Activated B cell treated with CpG ODN at 0.5 μM for 24 hours (primary cell): ENCODE measurements at regions of chr6 and their contacts with region 1.

Region 1: GRCh38 chr6:107459283-107460082 is at the start of gene PDSS2:
- DNase-seq: peak; percentile 95
- ATAC-seq: peak; percentile 96
- H3K4me3 Mint-ChIP-seq: peak within 1 kb of the TSS; percentile 95
- H3K27ac Mint-ChIP-seq: peak within 1 kb of the TSS; percentile 90
- H3K4me1 Mint-ChIP-seq: peaks cover 16% of the 10 kb centered on the region
- H3K27me3 Mint-ChIP-seq: no peaks in the 10 kb centered on the region
- CTCF ChIP-seq: no peak
- total RNA-seq, gene PDSS2: 14.6 and 19.3 TPM in 2 replicates

Region 2: GRCh38 chr6:107033126-107033525 is 426.4 kb before region 1 on chr6:
- CTCF ChIA-PET with region 1: no interaction called
- POLR2A ChIA-PET with region 1: no interaction called
- intact Hi-C with region 1: loop called (anchors 2 kb)
- DNase-seq: no peak
- ATAC-seq: no peak
- H3K4me3 Mint-ChIP-seq: no peak overlapping the region
- H3K27ac Mint-ChIP-seq: no peak overlapping the region
- H3K4me1 Mint-ChIP-seq: peaks cover 21% of the 10 kb centered on the region
- H3K27me3 Mint-ChIP-seq: no peaks in the 10 kb centered on the region
- CTCF ChIP-seq: no peak

Region 3: DNA sequence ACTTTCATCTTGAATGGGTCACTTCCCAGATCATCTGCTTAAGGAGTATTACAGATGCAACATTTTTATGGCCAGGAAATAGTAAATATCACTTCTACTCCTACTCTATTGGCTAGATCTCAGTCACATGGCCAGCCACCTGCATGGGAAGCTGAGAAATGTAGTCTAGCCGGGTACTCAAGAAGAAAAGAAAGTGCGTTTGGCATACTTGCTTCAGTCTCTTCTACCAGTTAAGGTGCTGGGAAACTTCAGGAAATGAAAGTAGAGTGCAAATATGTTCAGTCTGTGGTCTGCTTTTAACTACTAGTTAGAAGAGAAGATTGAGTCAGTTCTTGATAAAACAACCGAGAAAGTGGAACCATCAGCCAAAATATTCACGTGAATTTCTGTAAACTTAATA is 129.3 kb before region 1 on chr6:
- CTCF ChIA-PET with region 1: no interaction called
- POLR2A ChIA-PET with region 1: interaction called, 14 read pairs
- intact Hi-C with region 1: loop called (anchors 1 kb)
- DNase-seq: no peak
- ATAC-seq: peak; percentile 94
- H3K4me3 Mint-ChIP-seq: peak overlapping the region; percentile 25
- H3K27ac Mint-ChIP-seq: peak overlapping the region; percentile 41
- H3K4me1 Mint-ChIP-seq: peaks cover 18% of the 10 kb centered on the region
- H3K27me3 Mint-ChIP-seq: no peaks in the 10 kb centered on the region
- CTCF ChIP-seq: no peak

Region 4: GRCh38 chr6:107645800-107646575 is 186.5 kb after region 1 on chr6:
- CTCF ChIA-PET with region 1: no interaction called
- POLR2A ChIA-PET with region 1: interaction called, 14 read pairs
- intact Hi-C with region 1: no loop called
- DNase-seq: no peak
- ATAC-seq: no peak
- H3K4me3 Mint-ChIP-seq: no peak overlapping the region
- H3K27ac Mint-ChIP-seq: no peak overlapping the region
- H3K4me1 Mint-ChIP-seq: peaks cover 65% of the 10 kb centered on the region
- H3K27me3 Mint-ChIP-seq: no peaks in the 10 kb centered on the region
- CTCF ChIP-seq: no peak

Region 5: DNA sequence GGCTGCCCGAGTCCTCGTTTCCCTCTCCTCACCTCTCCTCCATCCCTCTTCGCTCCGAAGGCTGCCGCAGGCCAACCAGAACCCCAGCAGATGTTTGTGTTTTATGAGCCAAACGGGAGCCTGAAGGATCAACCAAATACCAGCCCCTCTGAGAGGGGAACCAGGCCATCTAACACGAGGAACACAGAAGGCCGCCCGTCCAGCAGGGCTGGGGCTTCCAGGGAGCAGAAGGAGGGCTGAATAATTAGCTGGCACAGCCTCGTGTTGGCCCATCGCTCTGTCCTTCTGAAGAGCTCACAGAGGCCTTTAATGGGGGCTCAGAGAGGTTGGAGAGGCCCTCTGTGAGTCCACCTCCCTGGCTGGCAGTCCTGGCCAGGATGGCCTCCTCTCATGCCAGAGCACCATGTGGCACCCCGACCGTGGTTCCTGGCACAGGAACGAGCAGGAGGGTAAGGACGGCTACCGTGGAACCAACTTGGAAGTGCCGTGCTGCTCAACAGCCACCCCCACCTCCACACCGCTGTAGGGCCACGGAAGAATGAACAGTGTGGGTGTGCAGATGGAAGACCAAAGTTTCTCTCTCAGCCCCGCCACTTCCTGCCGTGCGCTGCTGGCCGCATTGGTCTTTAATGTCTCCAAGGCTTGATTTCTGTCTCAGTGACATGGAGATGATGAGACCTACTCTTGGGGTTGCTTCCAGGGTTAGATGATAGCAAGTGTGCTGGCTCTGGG is 209.4 kb after region 1 on chr6:
- CTCF ChIA-PET with region 1: interaction called, 3 read pairs
- POLR2A ChIA-PET with region 1: interaction called, 8 read pairs
- intact Hi-C with region 1: loop called (anchors 1 kb)
- DNase-seq: peak; percentile 32
- ATAC-seq: peak; percentile 88
- H3K4me3 Mint-ChIP-seq: peak overlapping the region; percentile 32
- H3K27ac Mint-ChIP-seq: peak overlapping the region; percentile 76
- H3K4me1 Mint-ChIP-seq: peaks cover 71% of the 10 kb centered on the region
- H3K27me3 Mint-ChIP-seq: no peaks in the 10 kb centered on the region
- CTCF ChIP-seq: no peak

Region 6: DNA sequence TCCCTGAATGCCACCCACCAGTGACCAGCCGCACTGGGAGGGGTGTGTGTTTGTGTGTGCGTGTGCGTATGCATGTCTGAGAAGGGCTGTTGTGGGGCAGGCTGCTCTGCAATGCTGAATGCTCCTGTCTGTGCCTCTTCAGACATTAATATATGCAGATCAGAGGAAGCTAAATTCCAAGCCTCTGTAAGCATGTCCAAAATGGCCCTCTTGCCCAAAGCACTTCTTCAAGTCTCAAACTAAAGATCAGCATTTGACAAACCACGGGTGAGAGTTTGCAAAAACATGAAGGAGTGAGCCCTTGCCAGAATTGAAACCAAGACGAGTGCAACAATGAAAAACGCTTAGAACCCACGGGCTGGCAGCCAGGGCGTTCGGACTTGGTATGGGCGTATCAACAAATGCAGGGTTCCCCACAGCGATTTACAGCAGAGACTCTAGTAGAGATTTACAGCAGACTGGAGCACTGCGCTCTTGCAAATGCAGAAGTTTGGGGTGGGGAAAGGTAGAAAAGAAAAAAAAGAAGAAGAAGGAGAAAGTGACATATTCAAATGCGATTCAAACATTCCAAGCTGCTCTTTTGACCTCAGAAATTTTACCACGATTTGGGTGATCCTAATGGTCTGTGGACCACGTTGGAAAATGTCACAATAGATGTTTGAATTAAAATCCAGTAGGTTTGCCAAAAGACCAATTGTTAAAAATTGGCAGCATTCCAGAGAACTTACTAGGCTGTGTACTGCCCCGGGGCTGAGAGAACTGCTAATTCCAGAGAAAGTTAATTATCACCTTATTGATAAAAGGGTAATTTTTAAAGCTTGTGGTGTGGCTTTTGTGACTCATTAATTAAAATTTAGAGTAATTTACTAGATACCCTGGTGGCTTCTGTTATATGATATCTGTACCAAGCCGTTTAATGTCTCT is 361.1 kb after region 1 on chr6:
- CTCF ChIA-PET with region 1: no interaction called
- POLR2A ChIA-PET with region 1: interaction called, 3 read pairs
- intact Hi-C with region 1: loop called (anchors 5 kb)
- DNase-seq: no peak
- ATAC-seq: peak; percentile 23
- H3K4me3 Mint-ChIP-seq: peak overlapping the region; percentile 86
- H3K27ac Mint-ChIP-seq: peak overlapping the region; percentile 85
- H3K4me1 Mint-ChIP-seq: peaks cover 74% of the 10 kb centered on the region
- H3K27me3 Mint-ChIP-seq: no peaks in the 10 kb centered on the region
- CTCF ChIP-seq: no peak

Region 7: GRCh38 chr6:108074359-108075144 is 615.1 kb after region 1 on chr6 and contains the start of gene OSTM1:
- CTCF ChIA-PET with region 1: no interaction called
- POLR2A ChIA-PET with region 1: no interaction called
- intact Hi-C with region 1: loop called (anchors 10 kb)
- DNase-seq: peak; percentile 98
- ATAC-seq: peak; percentile 96
- H3K4me3 Mint-ChIP-seq: peak within 1 kb of the TSS; percentile 87
- H3K27ac Mint-ChIP-seq: peak within 1 kb of the TSS; percentile 89
- H3K4me1 Mint-ChIP-seq: peaks cover 32% of the 10 kb centered on the region
- H3K27me3 Mint-ChIP-seq: peaks cover 2% of the 10 kb centered on the region
- CTCF ChIP-seq: no peak
- total RNA-seq, gene OSTM1: 17.6 and 21.4 TPM in 2 replicates